Stomach (tissue), 19 donors: ENCODE measurements at regions of chr7 and their contacts with region 1.

Region 1: DNA sequence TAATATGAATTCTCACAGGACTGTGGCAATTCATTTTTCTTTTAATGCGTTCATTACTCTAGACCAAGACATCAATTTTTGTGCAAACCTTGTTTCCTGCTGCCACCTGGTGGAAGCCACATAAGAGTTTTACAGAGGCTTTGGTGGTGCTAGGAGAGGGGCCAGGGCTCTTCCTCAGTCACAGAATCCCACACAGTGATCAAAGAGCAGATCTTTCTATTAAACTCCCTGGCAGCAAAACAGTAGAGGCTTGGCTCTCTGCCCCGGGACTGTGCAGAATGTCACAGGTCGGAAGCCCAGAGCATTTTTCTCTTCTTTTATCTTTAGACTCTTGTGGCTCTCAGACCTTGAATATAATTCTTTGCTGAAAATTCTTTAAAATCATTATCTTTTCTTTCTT is 506.4 kb upstream of the C7orf33 start:
- DNase-seq: peak; percentile 52 to 91
- H3K4me3 ChIP-seq: no peak overlapping the region
- H3K27ac ChIP-seq: no peak overlapping the region
- H3K4me1 ChIP-seq: peaks cover 0 to 13% (median 0%) of the 10 kb centered on the region in 4 donors
- H3K27me3 ChIP-seq: no peaks in the 10 kb centered on the region
- CTCF ChIP-seq: peak in 5 of 7 experiments; percentile 35 to 62 (median 53)
- EP300 ChIP-seq: no peak
- POLR2A ChIP-seq: no peak

Region 2: GRCh38 chr7:147235645-147236382 is 848.3 kb before region 1 on chr7:
- intact Hi-C with region 1: loop called (anchors 5 kb)
- DNase-seq: no peak
- H3K4me3 ChIP-seq: no peak overlapping the region
- H3K27ac ChIP-seq: no peak overlapping the region
- H3K4me1 ChIP-seq: no peaks in the 10 kb centered on the region
- H3K27me3 ChIP-seq: no peaks in the 10 kb centered on the region
- CTCF ChIP-seq: no peak
- EP300 ChIP-seq: no peak
- POLR2A ChIP-seq: no peak

Region 3: DNA sequence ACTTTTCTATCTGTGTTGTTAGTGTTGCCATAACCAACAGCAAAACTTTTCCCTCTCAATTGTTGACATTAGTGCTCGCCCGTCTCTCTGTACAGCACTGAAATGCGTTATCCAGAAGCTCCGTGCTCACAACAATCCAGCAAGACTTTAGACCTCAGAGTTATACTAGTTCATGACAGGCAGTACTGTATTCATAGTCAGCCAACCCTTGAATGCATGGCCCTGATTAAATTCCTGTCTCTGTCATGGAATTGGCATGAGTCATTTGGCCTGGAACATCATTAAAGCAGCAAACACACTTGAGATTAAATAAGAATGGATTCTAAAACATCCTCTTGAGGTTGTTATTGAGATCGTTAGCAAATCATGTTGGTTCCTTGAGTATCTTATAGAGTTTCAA is 100.9 kb after region 1 on chr7:
- intact Hi-C with region 1: no loop called
- DNase-seq: peak in 1 of 2 donors; percentile 43
- H3K4me3 ChIP-seq: no peak overlapping the region
- H3K27ac ChIP-seq: no peak overlapping the region
- H3K4me1 ChIP-seq: peaks cover 0 to 4% (median 0%) of the 10 kb centered on the region in 4 donors
- H3K27me3 ChIP-seq: no peaks in the 10 kb centered on the region
- CTCF ChIP-seq: no peak
- EP300 ChIP-seq: no peak
- POLR2A ChIP-seq: no peak